ENCODE measurements at regions of chr1 and their contacts with region 1.

Region 1: GRCh38 chr1:71521655-71522264 is 440.9 kb upstream of the ZRANB2 start:
- DNase-seq: peak; percentile 39 to 73
- ATAC-seq: peak; percentile 81

Region 2: GRCh38 chr1:71196685-71197084 is 325.1 kb before region 1 on chr1:
- intact Hi-C with region 1: loop called in 1 of 2 experiments (anchors 10 kb)
- DNase-seq: no peak
- ATAC-seq: peak; percentile 57

Region 3: DNA sequence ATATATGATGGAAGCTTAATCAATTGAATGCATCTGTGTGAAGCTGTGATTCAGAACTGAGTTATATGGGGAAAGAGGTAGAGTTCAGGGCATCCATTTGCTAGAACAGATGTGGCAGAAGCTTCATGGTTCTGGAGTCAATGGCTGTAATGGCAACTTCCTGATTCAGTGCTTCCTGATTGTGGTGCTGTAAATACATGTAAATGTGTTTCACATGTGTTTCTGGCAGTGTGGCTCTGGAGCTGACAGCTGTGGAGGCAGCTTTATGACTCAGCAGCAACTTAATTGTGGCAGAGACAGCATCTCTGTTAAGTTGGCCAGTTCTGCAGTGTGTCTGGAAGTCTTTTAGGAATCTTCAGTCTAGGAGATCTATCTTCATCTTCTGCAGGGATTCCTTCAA is 214.3 kb before region 1 on chr1:
- intact Hi-C with region 1: no loop called
- DNase-seq: peak; percentile 7 to 30
- ATAC-seq: peak; percentile 93

Measured in left colon (tissue), 2 donors.